HepG2 (cell line): ENCODE measurements at regions of chr11 and their contacts with region 1.

Region 1: GRCh38 chr11:117316197-117316961 is at the start of gene BACE1:
- DNase-seq: peak; percentile 85
- ATAC-seq: peak; percentile 94
- H3K4me3 ChIP-seq: peak within 1 kb of the TSS; percentile 74 to 90 (median 88)
- H3K27ac ChIP-seq: peak within 1 kb of the TSS; percentile 41
- H3K4me1 ChIP-seq: peaks cover 65% of the 10 kb centered on the region
- H3K27me3 ChIP-seq: no peaks in the 10 kb centered on the region; a peak in 1 of 5 replicates
- CTCF ChIP-seq: peak; percentile 90
- EP300 ChIP-seq: no peak
- POLR2A ChIP-seq: peak in 1 of 2 experiments; percentile 57; a peak in 2 of 4 replicates
- RAD21 ChIP-seq: peak; percentile 74
- total RNA-seq, gene BACE1: 7.5 and 10.2 TPM in 2 replicates

Region 2: DNA sequence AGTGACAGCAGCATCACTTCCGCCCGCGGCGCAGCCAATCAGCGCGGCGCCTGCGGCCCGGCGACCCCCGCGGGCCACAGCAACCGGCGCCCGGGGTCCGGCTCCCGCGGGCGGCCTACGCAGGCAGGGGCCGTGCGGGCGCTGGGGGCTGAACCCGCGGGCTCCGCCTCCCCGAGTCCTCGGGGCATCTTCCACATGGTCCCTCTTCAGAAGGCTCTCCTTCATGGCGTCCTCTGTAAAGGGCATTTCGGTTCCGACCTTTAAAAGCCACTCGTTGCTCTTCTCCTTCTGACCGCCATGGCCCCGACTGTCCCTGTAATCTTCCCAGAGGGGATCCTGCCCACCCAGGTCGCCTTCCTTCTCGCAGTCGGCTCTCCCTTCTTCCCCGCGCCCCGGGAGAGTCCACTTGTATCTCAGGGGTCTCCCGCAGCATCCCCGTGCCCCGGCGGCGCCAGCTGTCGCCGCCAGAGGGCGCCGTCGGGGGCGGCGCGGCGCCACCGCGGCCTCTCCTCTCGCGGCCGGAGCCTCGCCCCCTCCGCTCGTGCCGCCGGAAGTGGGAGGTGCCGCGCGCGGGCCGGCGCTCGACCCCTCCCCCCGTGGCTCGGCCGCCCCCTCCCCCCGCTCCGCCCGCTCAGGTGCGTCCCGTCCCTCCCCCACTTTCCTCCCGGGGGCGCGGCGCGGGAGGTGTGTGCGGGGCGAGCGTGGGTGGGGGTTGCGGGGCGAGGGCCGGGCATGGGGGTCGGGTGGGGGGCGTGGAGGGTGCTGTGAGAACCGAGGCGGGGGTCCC is 84.1 kb before region 1 on chr11 and contains the start of gene RNF214:
- CTCF ChIA-PET with region 1: interaction called, 11 read pairs
- POLR2A ChIA-PET with region 1: no interaction called
- in situ Hi-C with region 1: loop called (anchors 5 kb)
- intact Hi-C with region 1: loop called (anchors 2 kb)
- DNase-seq: peak; percentile 53
- ATAC-seq: peak; percentile 89
- H3K4me3 ChIP-seq: peak within 1 kb of the TSS; percentile 77 to 99 (median 99)
- H3K27ac ChIP-seq: peak within 1 kb of the TSS; percentile 57
- H3K4me1 ChIP-seq: peaks cover 27% of the 10 kb centered on the region
- H3K27me3 ChIP-seq: no peaks in the 10 kb centered on the region
- CTCF ChIP-seq: peak; percentile 74
- EP300 ChIP-seq: no peak
- POLR2A ChIP-seq: no peak
- RAD21 ChIP-seq: peak; percentile 83
- total RNA-seq, gene RNF214: 10.7 and 12.4 TPM in 2 replicates

Region 3: DNA sequence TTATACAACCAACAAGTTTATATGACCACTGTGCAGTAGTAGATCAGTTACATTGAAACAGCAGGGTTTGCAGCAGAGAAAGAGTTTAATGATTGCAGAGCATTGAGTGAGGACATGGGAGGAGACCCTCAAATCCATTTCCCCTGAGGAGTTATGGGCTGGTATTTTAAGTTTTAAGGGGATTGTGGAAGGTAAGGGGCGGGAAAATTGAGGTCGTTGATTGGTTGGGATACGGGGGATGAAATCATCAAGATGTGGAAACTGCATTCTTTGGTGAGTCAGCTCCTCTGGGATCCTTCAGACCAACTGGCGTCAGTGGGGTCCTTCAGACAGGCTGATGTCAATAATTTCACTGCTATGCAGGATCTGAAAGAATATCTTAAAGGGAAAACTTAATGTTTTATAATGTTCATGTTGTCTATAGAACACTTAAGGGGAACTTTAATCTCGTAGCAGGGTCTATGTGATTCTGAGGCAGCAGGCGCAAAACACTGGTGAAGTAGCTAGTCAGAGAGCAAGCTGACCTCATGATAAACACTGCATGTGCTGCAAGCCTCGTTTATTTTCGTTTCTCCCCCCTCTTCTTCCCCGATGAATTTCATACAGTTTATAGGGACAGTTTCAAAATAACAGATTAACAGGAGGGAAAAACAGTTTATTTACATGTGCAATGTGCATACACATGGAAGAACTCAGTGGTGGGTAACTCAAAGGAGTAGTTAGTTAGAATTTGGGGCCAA is 42.7 kb before region 1 on chr11:
- CTCF ChIA-PET with region 1: no interaction called
- POLR2A ChIA-PET with region 1: no interaction called
- in situ Hi-C with region 1: no loop called
- intact Hi-C with region 1: loop called (anchors 5 kb)
- DNase-seq: no peak
- ATAC-seq: no peak
- H3K4me3 ChIP-seq: no peak overlapping the region
- H3K27ac ChIP-seq: no peak overlapping the region
- H3K4me1 ChIP-seq: peaks cover 24% of the 10 kb centered on the region
- H3K27me3 ChIP-seq: no peaks in the 10 kb centered on the region
- CTCF ChIP-seq: no peak
- EP300 ChIP-seq: no peak
- POLR2A ChIP-seq: no peak
- RAD21 ChIP-seq: no peak

Region 4: GRCh38 chr11:117300283-117300663 is 16.1 kb before region 1 on chr11:
- CTCF ChIA-PET with region 1: no interaction called
- POLR2A ChIA-PET with region 1: interaction called, 62 read pairs
- in situ Hi-C with region 1: no loop called
- intact Hi-C with region 1: no loop called
- DNase-seq: peak; percentile 52
- ATAC-seq: peak; percentile 69
- H3K4me3 ChIP-seq: peak overlapping the region; percentile 62 to 78 (median 65)
- H3K27ac ChIP-seq: peak overlapping the region; percentile 92
- H3K4me1 ChIP-seq: peaks cover 72% of the 10 kb centered on the region
- H3K27me3 ChIP-seq: no peaks in the 10 kb centered on the region
- CTCF ChIP-seq: no peak
- EP300 ChIP-seq: no peak
- POLR2A ChIP-seq: no peak
- RAD21 ChIP-seq: no peak

Region 5: GRCh38 chr11:117327567-117328374 is 11.4 kb after region 1 on chr11 and contains the start of gene CEP164:
- CTCF ChIA-PET with region 1: no interaction called
- POLR2A ChIA-PET with region 1: interaction called, 18 read pairs
- in situ Hi-C with region 1: no loop called
- intact Hi-C with region 1: no loop called
- DNase-seq: peak; percentile 93
- ATAC-seq: peak; percentile 98
- H3K4me3 ChIP-seq: peak within 1 kb of the TSS; percentile 78 to 86 (median 79)
- H3K27ac ChIP-seq: peak within 1 kb of the TSS; percentile 60
- H3K4me1 ChIP-seq: peaks cover 27% of the 10 kb centered on the region
- H3K27me3 ChIP-seq: no peaks in the 10 kb centered on the region; a peak in 1 of 5 replicates
- CTCF ChIP-seq: no peak
- EP300 ChIP-seq: no peak
- POLR2A ChIP-seq: peak; percentile 38 to 55
- RAD21 ChIP-seq: no peak
- total RNA-seq, gene CEP164: 9.6 and 15.2 TPM in 2 replicates

Region 6: GRCh38 chr11:117378976-117379865 is 62.8 kb after region 1 on chr11:
- CTCF ChIA-PET with region 1: no interaction called
- POLR2A ChIA-PET with region 1: no interaction called
- in situ Hi-C with region 1: no loop called
- intact Hi-C with region 1: no loop called
- DNase-seq: no peak
- ATAC-seq: no peak
- H3K4me3 ChIP-seq: no peak overlapping the region
- H3K27ac ChIP-seq: no peak overlapping the region
- H3K4me1 ChIP-seq: no peaks in the 10 kb centered on the region
- H3K27me3 ChIP-seq: no peaks in the 10 kb centered on the region
- CTCF ChIP-seq: no peak
- EP300 ChIP-seq: no peak
- POLR2A ChIP-seq: no peak
- RAD21 ChIP-seq: no peak